Activated T-helper 2 cell treated with anti-CD3 and anti-CD28 coated beads, Interferon-gamma antibody, Interleukin-2, Interleukin-4, amounts not matched to agents 10 μg/mL and 5 μg/mL and 100 μg/mL, durations not matched to agents 14 hours and 24 hours and 36 hours (primary cell): ENCODE measurements at regions of chr4 and their contacts with region 1.

Region 1: DNA sequence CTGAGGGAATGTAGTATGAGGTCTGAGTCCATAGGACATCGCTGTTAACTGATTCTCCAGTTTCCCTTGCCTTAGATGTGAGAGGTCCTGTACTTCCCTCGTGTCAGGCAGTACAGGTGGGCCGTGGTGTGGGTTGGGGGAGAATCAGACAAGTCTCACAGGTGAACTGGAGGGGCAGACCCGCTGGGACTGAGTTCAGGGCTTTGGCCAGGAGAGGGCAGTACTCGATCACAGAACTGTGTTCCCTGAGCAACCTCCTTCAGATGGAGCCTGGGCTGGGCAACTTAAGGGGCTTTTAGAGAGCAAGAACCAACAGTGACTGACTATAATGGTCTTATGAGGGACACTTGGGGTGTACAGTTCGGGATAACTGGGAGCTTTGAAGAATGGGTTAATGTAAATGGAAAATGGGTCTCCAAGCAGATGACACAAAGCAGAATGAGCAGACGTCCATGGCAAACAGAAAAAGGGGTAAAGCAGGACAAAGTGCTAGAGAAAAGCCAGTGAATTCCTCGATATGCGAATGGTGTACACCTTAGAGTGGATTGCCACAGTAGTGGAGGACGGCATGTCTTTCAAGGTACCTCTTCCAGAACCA is 83.6 kb downstream of the CCNG2 start:
- DNase-seq: peak; percentile 18
- H3K4me3 Mint-ChIP-seq: no peak overlapping the region
- H3K27ac Mint-ChIP-seq: no peak overlapping the region
- H3K4me1 Mint-ChIP-seq: peaks cover 1% of the 10 kb centered on the region
- H3K27me3 Mint-ChIP-seq: no peaks in the 10 kb centered on the region

Region 2: GRCh38 chr4:77308843-77309242 is 68.3 kb after region 1 on chr4:
- intact Hi-C with region 1: loop called (anchors 1 kb)
- DNase-seq: no peak
- H3K4me3 Mint-ChIP-seq: no peak overlapping the region
- H3K27ac Mint-ChIP-seq: no peak overlapping the region
- H3K4me1 Mint-ChIP-seq: no peaks in the 10 kb centered on the region
- H3K27me3 Mint-ChIP-seq: peaks cover 1% of the 10 kb centered on the region

Region 3: DNA sequence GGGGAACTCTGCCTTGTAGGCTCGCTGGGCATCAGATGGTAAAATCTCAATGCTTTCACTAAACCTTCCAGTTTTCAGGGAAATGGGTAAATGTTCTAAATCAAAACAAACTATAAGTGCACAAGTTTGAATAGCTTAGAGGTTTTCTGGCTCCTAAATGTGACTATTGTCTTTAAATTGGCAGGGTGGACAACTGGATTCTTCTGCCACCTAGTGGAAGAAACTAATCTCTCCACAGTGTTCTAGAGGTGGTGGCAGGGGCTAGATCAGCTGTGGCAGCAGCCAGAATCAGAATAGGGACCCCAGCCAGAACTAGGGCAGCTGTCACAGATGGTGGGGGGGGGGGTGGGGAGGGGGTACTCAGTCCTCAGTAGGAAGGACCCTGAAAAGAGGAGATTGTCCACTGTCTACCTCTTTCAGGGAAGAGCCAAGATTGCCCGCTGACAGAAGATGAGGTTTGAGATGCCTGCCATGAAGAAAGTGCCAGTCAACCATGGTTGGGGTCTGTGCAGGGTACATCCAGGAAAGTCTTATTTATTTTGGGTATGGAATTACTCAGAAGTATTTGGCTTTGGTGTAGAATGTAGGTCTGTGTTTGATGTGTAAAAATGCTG is 117.9 kb after region 1 on chr4:
- intact Hi-C with region 1: loop called (anchors 1 kb)
- DNase-seq: no peak
- H3K4me3 Mint-ChIP-seq: no peak overlapping the region
- H3K27ac Mint-ChIP-seq: no peak overlapping the region
- H3K4me1 Mint-ChIP-seq: no peaks in the 10 kb centered on the region
- H3K27me3 Mint-ChIP-seq: peaks cover 3% of the 10 kb centered on the region